ENCODE measurements at regions of chr19 and their contacts with region 1.

Region 1: DNA sequence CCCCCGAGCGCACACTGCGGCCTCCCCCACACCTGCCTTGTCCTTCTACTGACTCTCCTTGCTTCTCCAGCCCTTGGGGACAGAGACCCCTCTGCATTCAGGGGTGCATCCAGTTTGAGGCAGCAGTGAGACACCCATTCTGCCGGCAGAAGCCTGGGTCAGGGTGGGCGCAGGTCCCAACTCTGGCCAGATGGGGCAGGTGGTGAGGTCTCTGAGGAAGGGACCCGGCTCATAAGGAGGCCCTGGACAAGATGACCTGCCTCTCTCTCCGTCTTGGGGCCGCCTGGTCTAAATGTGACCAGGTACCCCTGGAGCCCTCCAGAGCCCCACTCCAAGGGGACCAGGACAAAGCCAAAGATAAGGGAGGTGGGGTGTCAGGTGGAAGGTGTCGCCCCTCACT is 6.1 kb downstream of the CHERP start:
- DNase-seq: no peak
- H3K4me3 ChIP-seq: no peak overlapping the region
- H3K27ac ChIP-seq: no peak overlapping the region
- H3K4me1 ChIP-seq: peaks cover 3 to 5% of the 10 kb centered on the region in 2 donors
- H3K27me3 ChIP-seq: no peaks in the 10 kb centered on the region
- CTCF ChIP-seq: no peak
- POLR2A ChIP-seq: no peak

Region 2: DNA sequence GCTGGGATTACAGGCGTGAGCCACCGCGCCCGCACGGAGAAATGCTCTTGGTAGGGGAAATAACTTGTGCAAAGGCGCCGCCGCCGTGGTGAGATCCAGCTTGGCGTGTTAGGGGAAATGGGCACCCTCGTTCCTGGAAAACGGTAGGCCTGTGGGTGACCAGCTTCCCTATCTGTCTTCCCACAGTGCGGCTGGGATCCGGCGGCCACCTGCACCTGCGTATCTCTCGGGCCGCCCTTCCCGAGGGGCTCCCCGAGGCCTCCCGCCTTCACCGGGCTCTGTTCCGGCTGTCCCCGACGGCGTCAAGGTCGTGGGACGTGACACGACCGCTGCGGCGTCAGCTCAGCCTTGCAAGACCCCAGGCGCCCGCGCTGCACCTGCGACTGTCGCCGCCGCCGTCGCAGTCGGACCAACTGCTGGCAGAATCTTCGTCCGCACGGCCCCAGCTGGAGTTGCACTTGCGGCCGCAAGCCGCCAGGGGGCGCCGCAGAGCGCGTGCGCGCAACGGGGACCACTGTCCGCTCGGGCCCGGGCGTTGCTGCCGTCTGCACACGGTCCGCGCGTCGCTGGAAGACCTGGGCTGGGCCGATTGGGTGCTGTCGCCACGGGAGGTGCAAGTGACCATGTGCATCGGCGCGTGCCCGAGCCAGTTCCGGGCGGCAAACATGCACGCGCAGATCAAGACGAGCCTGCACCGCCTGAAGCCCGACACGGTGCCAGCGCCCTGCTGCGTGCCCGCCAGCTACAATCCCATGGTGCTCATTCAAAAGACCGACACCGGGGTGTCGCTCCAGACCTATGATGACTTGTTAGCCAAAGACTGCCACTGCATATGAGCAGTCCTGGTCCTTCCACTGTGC is 1852.2 kb after region 1 on chr19:
- intact Hi-C with region 1: loop called (anchors 10 kb)
- DNase-seq: peak; percentile 55 to 85
- H3K4me3 ChIP-seq: peak overlapping the region; percentile 43 to 65 (median 46)
- H3K27ac ChIP-seq: peak overlapping the region; percentile 38 to 50
- H3K4me1 ChIP-seq: no peaks in the 10 kb centered on the region
- H3K27me3 ChIP-seq: no peaks in the 10 kb centered on the region
- CTCF ChIP-seq: peak; percentile 99
- POLR2A ChIP-seq: no peak